ENCODE measurements at regions of chr10 and their contacts with region 1.

Region 1: DNA sequence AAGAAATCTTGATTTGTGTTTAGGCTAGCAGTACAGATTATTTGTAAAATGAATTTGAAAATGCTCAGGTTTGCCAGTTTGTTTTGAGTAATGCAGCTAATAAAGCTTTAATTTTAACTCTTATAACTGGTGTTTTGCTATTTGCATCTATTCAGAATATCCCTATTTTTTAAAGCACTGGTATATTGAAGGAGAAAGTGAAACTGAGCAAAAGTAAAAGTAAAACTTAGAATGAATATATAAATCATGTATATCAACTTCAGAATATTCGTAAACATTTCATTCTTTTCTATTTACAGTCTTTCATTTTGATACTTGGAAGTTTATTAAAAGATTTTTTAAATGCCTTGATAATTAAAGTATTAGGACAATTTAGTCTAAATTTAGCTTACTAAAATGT is 26.2 kb downstream of the TASOR2 start:
- DNase-seq: no peak
- ATAC-seq: no peak
- H3K4me3 Mint-ChIP-seq: peak overlapping the region; percentile 52
- H3K27ac Mint-ChIP-seq: no peak overlapping the region
- H3K4me1 Mint-ChIP-seq: peaks cover 69% of the 10 kb centered on the region
- H3K27me3 Mint-ChIP-seq: no peaks in the 10 kb centered on the region
- CTCF ChIP-seq: no peak

Region 2: DNA sequence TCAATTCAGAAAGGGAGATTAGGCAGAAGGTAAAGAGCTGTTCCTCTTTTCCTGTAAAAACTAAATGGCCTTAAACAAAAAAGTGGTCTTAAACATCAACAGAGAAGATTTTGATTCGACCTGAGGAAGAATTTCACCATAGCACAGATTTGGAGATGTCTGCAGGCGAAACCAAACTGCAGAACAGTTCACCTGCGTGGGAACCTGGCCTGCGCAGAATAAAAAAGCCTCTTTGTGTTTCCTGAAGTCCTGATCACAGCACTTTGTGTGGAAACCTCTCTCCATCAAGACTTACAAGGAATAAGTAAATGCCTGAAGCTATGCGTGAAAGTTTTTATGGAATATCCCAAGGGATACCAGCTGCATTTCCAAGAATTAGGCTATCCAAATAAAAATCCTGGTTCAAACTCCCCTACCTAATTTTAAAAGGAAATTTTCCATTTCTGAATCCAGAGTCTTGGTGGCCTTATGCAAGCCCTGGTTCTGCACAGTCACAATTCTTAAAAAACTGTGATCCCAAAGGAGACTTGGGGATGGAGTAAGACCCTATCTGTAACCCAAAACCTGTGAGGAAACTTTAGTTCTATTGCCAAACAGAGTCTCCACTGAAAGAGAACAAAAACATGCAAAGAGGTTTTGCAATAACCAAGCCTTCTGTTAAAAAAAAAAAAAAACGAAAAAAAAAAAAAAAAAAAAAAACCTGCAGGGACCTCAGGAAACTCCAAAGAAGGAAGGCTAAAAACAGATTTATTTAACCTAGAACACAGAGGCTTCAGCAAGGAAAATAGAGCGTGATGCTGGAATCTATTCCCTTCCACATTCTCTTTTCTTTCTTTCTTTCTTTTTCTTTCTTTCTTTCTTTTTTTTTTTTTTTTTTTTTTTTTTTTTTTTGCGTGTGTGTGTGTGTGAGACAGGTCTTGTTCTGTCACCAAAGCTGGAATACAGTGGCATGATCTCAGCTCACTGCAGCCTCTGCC is 175.7 kb before region 1 on chr10:
- CTCF ChIA-PET with region 1: no interaction called
- POLR2A ChIA-PET with region 1: no interaction called
- intact Hi-C with region 1: no loop called
- DNase-seq: no peak
- ATAC-seq: no peak
- H3K4me3 Mint-ChIP-seq: no peak overlapping the region
- H3K27ac Mint-ChIP-seq: no peak overlapping the region
- H3K4me1 Mint-ChIP-seq: no peaks in the 10 kb centered on the region
- H3K27me3 Mint-ChIP-seq: peaks cover 3% of the 10 kb centered on the region
- CTCF ChIP-seq: no peak

Region 3: GRCh38 chr10:5629303-5630111 is 81.4 kb before region 1 on chr10:
- CTCF ChIA-PET with region 1: interaction called, 4 read pairs
- POLR2A ChIA-PET with region 1: no interaction called
- intact Hi-C with region 1: loop called (anchors 2 kb)
- DNase-seq: peak; percentile 71
- ATAC-seq: peak; percentile 98
- H3K4me3 Mint-ChIP-seq: no peak overlapping the region
- H3K27ac Mint-ChIP-seq: no peak overlapping the region
- H3K4me1 Mint-ChIP-seq: peaks cover 10% of the 10 kb centered on the region
- H3K27me3 Mint-ChIP-seq: peaks cover 5% of the 10 kb centered on the region
- CTCF ChIP-seq: peak; percentile 78

Region 4: GRCh38 chr10:5692461-5693358 is 18.1 kb before region 1 on chr10:
- CTCF ChIA-PET with region 1: interaction called, 3 read pairs
- POLR2A ChIA-PET with region 1: interaction called, 4 read pairs
- intact Hi-C with region 1: loop called (anchors 2 kb)
- DNase-seq: peak; percentile 66
- ATAC-seq: peak; percentile 90
- H3K4me3 Mint-ChIP-seq: peak overlapping the region; percentile 83
- H3K27ac Mint-ChIP-seq: peak overlapping the region; percentile 83
- H3K4me1 Mint-ChIP-seq: peaks cover 72% of the 10 kb centered on the region
- H3K27me3 Mint-ChIP-seq: no peaks in the 10 kb centered on the region
- CTCF ChIP-seq: no peak

Region 5: DNA sequence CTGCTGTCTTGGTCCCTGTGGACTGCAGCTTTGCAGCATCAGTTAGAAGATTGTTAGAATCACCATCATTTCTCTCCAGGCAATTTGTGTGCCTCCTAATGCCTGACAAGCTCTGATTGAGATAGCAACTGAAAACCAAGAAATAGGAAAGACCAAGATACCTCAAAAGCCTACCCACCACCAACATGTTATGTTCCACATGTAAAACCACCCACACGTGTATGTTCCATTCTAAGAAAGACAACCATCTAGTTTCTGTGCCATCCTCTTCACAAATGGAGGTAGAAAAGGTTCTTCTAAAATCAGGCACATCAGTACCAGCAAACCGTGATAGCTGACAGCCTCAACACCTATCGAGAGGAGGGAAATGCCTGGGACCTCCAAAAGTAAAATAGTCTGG is 20.7 kb after region 1 on chr10:
- CTCF ChIA-PET with region 1: no interaction called
- POLR2A ChIA-PET with region 1: no interaction called
- intact Hi-C with region 1: loop called (anchors 2 kb)
- DNase-seq: no peak
- ATAC-seq: no peak
- H3K4me3 Mint-ChIP-seq: no peak overlapping the region
- H3K27ac Mint-ChIP-seq: peak overlapping the region; percentile 1
- H3K4me1 Mint-ChIP-seq: peaks cover 1% of the 10 kb centered on the region
- H3K27me3 Mint-ChIP-seq: no peaks in the 10 kb centered on the region
- CTCF ChIP-seq: no peak